Right cardiac atrium (tissue), 5 donors: ENCODE measurements at regions of chr16 and their contacts with region 1.

Region 1: GRCh38 chr16:4506450-4506849 is 30.3 kb downstream of the HMOX2 start:
- DNase-seq: peak in 1 of 3 donors; percentile 45
- ATAC-seq: peak; percentile 72 to 76
- H3K4me3 ChIP-seq: no peak overlapping the region
- H3K27ac ChIP-seq: no peak overlapping the region
- H3K4me1 ChIP-seq: peaks cover 14% of the 10 kb centered on the region
- H3K27me3 ChIP-seq: no peaks in the 10 kb centered on the region

Region 2: DNA sequence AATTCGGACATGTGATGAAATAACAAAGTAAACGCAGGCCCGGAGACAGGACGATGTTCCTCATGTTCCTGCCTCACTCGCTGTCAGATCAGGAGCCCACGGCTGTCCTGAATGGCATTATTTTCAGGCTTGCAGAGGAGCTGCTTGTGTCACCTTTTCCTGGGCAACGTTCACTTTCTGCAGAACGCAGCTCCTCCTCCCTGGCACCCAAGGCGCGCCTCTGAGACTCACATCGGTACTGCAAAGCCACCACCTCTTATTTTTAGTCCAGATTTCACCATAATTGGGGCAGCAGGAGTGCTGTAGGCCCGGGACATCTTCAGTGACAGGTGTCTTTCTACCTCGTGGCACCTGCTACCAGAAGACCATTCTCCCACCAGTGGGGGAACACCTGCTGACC is 41.7 kb after region 1 on chr16:
- intact Hi-C with region 1: loop called (anchors 5 kb)
- DNase-seq: no peak
- ATAC-seq: no peak
- H3K4me3 ChIP-seq: no peak overlapping the region
- H3K27ac ChIP-seq: no peak overlapping the region
- H3K4me1 ChIP-seq: no peaks in the 10 kb centered on the region
- H3K27me3 ChIP-seq: no peaks in the 10 kb centered on the region

Region 3: DNA sequence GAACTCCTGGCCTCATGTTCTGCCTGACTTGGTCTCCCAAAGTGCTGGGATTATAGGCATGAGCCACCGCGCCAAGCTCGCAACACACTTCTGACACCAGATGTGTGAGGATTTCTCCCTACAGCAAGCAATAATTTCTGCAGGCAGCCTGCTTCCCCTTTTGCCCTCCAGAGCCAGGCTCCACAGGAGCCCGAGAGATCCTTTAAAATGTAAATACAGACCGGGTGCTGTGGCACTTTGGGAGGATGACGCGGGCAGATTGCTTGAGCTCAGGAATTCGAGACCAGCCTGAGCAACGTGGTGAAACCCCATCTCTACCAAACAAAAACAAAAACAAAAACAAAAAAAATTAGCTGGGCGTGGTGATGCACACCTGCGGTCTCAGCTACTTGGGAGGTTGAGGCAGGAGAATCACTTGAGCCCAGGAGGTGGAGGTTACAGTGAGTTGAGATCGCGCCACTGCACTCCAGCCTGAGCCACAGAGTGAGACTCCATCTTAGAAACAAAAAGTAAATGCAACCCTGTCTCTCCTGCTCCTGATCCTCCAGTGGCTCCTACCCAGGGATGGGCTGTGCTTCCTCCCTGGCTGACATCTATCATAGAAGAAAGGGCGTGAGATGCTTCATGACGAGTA is 64.4 kb after region 1 on chr16:
- intact Hi-C with region 1: no loop called
- DNase-seq: no peak
- ATAC-seq: no peak
- H3K4me3 ChIP-seq: no peak overlapping the region
- H3K27ac ChIP-seq: no peak overlapping the region
- H3K4me1 ChIP-seq: no peaks in the 10 kb centered on the region
- H3K27me3 ChIP-seq: no peaks in the 10 kb centered on the region

Region 4: GRCh38 chr16:5033256-5034169 is 527.1 kb after region 1 on chr16 and contains the start of gene NAGPA:
- intact Hi-C with region 1: no loop called
- DNase-seq: peak; percentile 90 to 97 (median 95)
- ATAC-seq: peak; percentile 93 to 95
- H3K4me3 ChIP-seq: peak within 1 kb of the TSS; percentile 60
- H3K27ac ChIP-seq: peak within 1 kb of the TSS; percentile 37
- H3K4me1 ChIP-seq: peaks cover 2% of the 10 kb centered on the region
- H3K27me3 ChIP-seq: no peaks in the 10 kb centered on the region
- total RNA-seq, gene NAGPA: 6.0 to 10.0 (median 7.8) TPM